ENCODE measurements at regions of chr10 and their contacts with region 1.

Region 1: GRCh38 chr10:69408318-69409175 is 8.2 kb downstream of the TACR2 start:
- DNase-seq: peak; percentile 62
- ATAC-seq: peak; percentile 91
- H3K4me3 ChIP-seq: peak overlapping the region; percentile 36; the same call in 1 of the 2 replicates
- H3K27ac ChIP-seq: no peak overlapping the region
- H3K4me1 ChIP-seq: peaks cover 16% of the 10 kb centered on the region
- H3K27me3 ChIP-seq: no peaks in the 10 kb centered on the region
- CTCF ChIP-seq: peak; percentile 27 to 68 (median 58); a peak in 5 of 6 replicates
- EP300 ChIP-seq: no peak
- POLR2A ChIP-seq: peak; percentile 78
- RAD21 ChIP-seq: peak; percentile 27

Region 2: GRCh38 chr10:68988530-68989316 is 419.8 kb before region 1 on chr10 and contains the start of gene KIFBP:
- CTCF ChIA-PET with region 1: interaction called, 4 read pairs
- POLR2A ChIA-PET with region 1: no interaction called
- RAD21 ChIA-PET with region 1: no interaction called
- SMC1A ChIA-PET with region 1: no interaction called
- in situ Hi-C with region 1: loop called (anchors 10 kb)
- intact Hi-C with region 1: no loop called
- DNase-seq: peak; percentile 89
- ATAC-seq: peak; percentile 86
- H3K4me3 ChIP-seq: peak within 1 kb of the TSS; percentile 86
- H3K27ac ChIP-seq: peak within 1 kb of the TSS; percentile 70
- H3K4me1 ChIP-seq: peaks cover 7% of the 10 kb centered on the region
- H3K27me3 ChIP-seq: no peaks in the 10 kb centered on the region
- CTCF ChIP-seq: peak; percentile 44 to 60 (median 47); a peak in 5 of 6 replicates
- EP300 ChIP-seq: 0 out of 4 replicates have a peak, but pooled peaks of 1 of the 2 experiments have one; percentile 24
- POLR2A ChIP-seq: peak; percentile 86
- RAD21 ChIP-seq: peak; percentile 20; the same call in 1 of the 2 replicates
- polyA plus RNA-seq, gene KIFBP: 8.6 to 10.0 TPM

Region 3: DNA sequence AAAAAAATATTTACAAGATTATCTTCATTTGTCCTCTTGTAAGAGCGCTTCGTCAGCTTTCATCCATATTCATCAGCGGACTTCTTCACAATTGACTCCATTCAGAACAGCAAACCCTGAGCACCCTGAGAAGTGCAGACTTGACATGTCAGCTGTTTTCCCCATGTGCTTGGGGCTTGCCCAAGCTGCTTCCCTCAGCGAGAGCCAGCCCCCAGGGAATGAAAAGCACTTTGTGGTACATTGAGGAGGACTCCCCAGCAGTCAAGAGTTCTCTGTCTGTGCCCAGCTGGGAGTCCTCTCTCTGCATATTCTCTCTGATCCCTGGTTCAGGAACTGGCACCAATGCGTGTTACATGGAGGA is 165.7 kb before region 1 on chr10:
- CTCF ChIA-PET with region 1: interaction called, 25 read pairs
- POLR2A ChIA-PET with region 1: no interaction called
- RAD21 ChIA-PET with region 1: interaction called, 3 read pairs
- SMC1A ChIA-PET with region 1: interaction called, 6 read pairs
- in situ Hi-C with region 1: no loop called
- intact Hi-C with region 1: no loop called
- DNase-seq: no peak
- ATAC-seq: no peak
- H3K4me3 ChIP-seq: no peak overlapping the region
- H3K27ac ChIP-seq: no peak overlapping the region
- H3K4me1 ChIP-seq: no peaks in the 10 kb centered on the region
- H3K27me3 ChIP-seq: no peaks in the 10 kb centered on the region
- CTCF ChIP-seq: no peak
- EP300 ChIP-seq: no peak
- POLR2A ChIP-seq: no peak
- RAD21 ChIP-seq: no peak

Region 4: GRCh38 chr10:69375307-69376151 is 33.0 kb before region 1 on chr10:
- CTCF ChIA-PET with region 1: no interaction called
- POLR2A ChIA-PET with region 1: no interaction called
- RAD21 ChIA-PET with region 1: no interaction called
- SMC1A ChIA-PET with region 1: no interaction called
- in situ Hi-C with region 1: no loop called
- intact Hi-C with region 1: no loop called
- DNase-seq: no peak
- ATAC-seq: no peak
- H3K4me3 ChIP-seq: no peak overlapping the region
- H3K27ac ChIP-seq: no peak overlapping the region
- H3K4me1 ChIP-seq: peaks cover 3% of the 10 kb centered on the region; the same call in 1 of the 2 replicates
- H3K27me3 ChIP-seq: no peaks in the 10 kb centered on the region
- CTCF ChIP-seq: no peak
- EP300 ChIP-seq: no peak
- POLR2A ChIP-seq: no peak
- RAD21 ChIP-seq: no peak

Region 5: DNA sequence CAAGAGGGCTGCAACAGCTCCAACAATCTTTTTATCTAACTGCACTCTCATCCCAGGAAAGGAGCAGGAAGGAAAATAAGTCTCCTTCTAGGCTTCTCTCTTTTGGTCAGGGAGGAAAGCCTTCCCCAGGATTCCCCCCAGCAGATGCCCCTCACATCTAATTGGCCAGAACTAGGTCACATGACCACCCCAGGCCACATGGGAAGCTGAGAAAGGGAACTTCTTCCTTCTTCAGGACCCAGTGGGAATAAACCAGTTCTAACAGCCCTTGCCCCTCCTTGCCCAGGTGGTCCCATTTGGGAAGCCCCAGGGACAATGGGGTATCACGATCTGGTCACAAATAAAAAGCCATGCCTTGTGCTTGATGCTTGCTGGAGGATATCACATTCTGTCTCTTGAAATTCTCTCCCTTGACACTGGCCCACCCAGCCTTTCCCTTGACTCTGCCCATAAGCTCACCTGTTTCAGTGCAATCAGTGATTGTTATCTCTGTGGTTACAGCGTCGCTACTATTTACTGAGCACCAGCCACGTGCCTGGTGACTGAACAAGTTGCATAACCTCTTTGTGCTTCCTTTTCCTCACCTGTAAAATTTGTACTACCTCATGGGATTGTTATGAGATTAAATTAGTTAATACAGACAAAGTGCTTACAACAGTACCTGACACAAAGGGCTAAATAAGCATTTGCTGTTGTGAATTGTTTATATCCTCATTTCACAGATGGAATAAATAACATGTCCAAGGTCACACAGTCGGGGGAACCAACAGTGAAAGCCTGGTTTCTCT is 17.2 kb after region 1 on chr10:
- CTCF ChIA-PET with region 1: interaction called, 11 read pairs
- POLR2A ChIA-PET with region 1: no interaction called
- RAD21 ChIA-PET with region 1: interaction called, 3 read pairs
- SMC1A ChIA-PET with region 1: interaction called, 4 read pairs
- in situ Hi-C with region 1: no loop called
- intact Hi-C with region 1: no loop called
- DNase-seq: no peak
- ATAC-seq: peak; percentile 31
- H3K4me3 ChIP-seq: no peak overlapping the region
- H3K27ac ChIP-seq: no peak overlapping the region
- H3K4me1 ChIP-seq: peaks cover 9% of the 10 kb centered on the region; the same call in 1 of the 2 replicates
- H3K27me3 ChIP-seq: no peaks in the 10 kb centered on the region
- CTCF ChIP-seq: no peak
- EP300 ChIP-seq: no peak
- POLR2A ChIP-seq: no peak
- RAD21 ChIP-seq: no peak

Region 6: DNA sequence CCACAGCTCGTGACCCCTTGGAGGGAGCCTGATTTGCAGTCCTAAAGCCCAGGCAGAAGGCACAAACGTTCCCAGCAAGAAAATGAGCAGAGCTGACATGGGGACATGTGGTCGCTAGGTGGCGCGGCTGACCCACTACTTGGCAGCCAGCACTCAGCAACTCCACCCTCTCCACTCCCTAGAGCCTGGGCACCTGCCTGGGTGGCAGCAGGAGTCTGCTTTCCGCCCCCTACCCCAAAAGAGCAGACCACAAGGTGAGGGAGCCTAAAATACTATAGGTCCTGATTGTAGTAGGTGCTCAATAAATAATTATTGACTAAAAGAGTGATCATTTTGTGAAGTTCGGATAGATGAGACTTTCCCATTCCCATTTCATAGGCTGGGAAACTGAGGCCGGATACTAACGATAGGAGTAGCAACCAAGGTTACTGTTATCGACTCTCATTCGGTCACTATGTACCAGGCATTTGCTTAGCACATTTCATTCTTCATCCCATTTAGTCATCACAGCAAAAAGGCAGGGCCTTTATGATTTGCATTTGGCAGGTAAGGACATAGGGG is 107.2 kb after region 1 on chr10:
- CTCF ChIA-PET with region 1: interaction called, 10 read pairs
- POLR2A ChIA-PET with region 1: no interaction called
- RAD21 ChIA-PET with region 1: no interaction called
- SMC1A ChIA-PET with region 1: interaction called, 5 read pairs
- in situ Hi-C with region 1: no loop called
- intact Hi-C with region 1: no loop called
- DNase-seq: peak; percentile 16
- ATAC-seq: peak; percentile 100
- H3K4me3 ChIP-seq: no peak overlapping the region
- H3K27ac ChIP-seq: no peak overlapping the region
- H3K4me1 ChIP-seq: no peaks in the 10 kb centered on the region
- H3K27me3 ChIP-seq: no peaks in the 10 kb centered on the region; a peak in 1 of 4 replicates
- CTCF ChIP-seq: peak; percentile 92 to 98 (median 93); a peak in 5 of 6 replicates
- EP300 ChIP-seq: no peak
- POLR2A ChIP-seq: no peak
- RAD21 ChIP-seq: peak; percentile 85